CD4-positive, alpha-beta memory T cell (primary cell): ENCODE measurements at regions of chr19 and their contacts with region 1.

Region 1: DNA sequence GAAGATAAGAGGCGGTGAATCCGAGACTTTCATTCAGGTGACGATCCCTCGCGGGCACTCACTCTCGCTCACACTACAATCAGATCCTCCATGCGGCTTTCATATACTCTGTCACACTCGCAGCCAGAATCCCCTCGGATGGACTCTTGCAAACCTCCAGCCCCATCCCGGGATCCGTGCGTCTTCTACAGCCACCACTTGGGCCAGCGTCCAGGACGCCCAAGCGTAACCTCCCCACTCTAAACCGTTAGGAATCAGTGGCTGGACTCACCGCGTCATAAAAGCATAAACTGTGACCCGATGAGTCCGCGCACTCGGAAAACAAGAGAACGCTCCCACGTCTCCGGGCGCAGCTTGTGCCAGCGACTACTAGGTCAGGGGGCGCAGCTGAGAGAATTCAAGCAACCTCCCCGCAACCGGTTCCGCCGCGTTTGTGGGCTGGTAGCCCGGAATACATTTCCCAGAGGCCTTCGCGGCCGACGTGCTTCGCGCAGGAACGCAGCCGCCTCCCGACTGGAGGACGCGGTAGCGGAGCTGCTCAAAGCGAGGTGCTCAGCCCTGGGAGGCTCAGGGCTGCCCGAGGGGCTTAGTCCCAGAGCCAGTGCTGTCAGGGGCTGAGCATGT is 27.6 kb downstream of the ZNF607 start:
- DNase-seq: peak; percentile 70 to 78 (median 73)
- H3K4me3 ChIP-seq: peak overlapping the region; percentile 61 to 80
- H3K4me3 Mint-ChIP-seq: peak overlapping the region; percentile 84 to 98 (median 95)
- H3K27ac ChIP-seq: peak overlapping the region; percentile 49
- H3K27ac Mint-ChIP-seq: peak overlapping the region; percentile 79 to 97 (median 93)
- H3K4me1 ChIP-seq: peaks cover 6% of the 10 kb centered on the region
- H3K4me1 Mint-ChIP-seq: peaks cover 4 to 22% (median 10%) of the 10 kb centered on the region in 4 donors
- H3K27me3 ChIP-seq: no peaks in the 10 kb centered on the region
- H3K27me3 Mint-ChIP-seq: no peaks in the 10 kb centered on the region

Region 2: DNA sequence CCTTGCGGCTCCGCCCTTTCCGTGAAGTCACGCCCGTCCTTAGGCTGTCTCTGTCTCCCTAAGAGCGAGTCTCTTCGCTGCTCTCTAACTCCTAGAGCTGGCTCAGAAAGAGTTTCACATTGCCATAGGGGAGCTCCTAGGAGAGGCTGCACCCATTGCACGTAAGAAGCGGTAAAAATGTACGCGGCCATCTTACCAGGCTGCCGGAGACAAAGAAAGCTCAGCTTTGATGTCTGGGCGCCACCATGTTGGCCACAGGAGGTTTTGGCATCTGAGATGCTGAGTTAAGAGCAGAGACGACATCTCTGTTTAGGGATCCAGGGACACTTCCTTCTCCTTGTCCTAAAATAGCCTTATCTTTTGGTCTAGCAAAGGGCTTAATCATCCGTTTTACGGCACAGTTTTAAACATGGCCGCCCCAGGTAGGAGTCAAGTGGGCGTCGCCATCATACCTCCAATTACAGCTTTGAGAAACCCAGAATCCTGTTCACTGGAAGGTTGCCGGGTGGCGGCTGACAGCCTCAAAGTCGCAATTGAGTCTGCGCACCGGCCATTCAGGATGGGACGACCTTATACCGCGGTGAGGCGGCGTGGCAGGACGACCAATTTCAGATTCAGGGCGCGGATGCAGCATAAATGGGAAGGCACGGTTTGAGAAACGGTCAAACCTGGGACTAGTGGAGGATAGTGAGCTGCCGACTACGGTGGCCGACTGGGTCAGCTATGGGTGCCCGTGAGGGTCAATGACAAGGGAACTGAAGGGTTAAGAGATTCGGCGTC is 185.4 kb before region 1 on chr19 and contains the start of gene ZNF793:
- CTCF ChIA-PET with region 1: no interaction called
- POLR2A ChIA-PET with region 1: interaction called, 8 read pairs
- intact Hi-C with region 1: loop called (anchors 5 kb)
- DNase-seq: peak; percentile 85 to 88 (median 87)
- H3K4me3 ChIP-seq: peak within 1 kb of the TSS; percentile 57 to 78
- H3K4me3 Mint-ChIP-seq: no peak within 1 kb of the TSS
- H3K27ac ChIP-seq: peak within 1 kb of the TSS; percentile 88
- H3K27ac Mint-ChIP-seq: no peak within 1 kb of the TSS
- H3K4me1 ChIP-seq: peaks cover 17% of the 10 kb centered on the region
- H3K4me1 Mint-ChIP-seq: peaks cover 0 to 2% (median 0%) of the 10 kb centered on the region in 4 donors
- H3K27me3 ChIP-seq: no peaks in the 10 kb centered on the region
- H3K27me3 Mint-ChIP-seq: no peaks in the 10 kb centered on the region
- total RNA-seq, gene ZNF793: 10.2 to 13.8 TPM

Region 3: DNA sequence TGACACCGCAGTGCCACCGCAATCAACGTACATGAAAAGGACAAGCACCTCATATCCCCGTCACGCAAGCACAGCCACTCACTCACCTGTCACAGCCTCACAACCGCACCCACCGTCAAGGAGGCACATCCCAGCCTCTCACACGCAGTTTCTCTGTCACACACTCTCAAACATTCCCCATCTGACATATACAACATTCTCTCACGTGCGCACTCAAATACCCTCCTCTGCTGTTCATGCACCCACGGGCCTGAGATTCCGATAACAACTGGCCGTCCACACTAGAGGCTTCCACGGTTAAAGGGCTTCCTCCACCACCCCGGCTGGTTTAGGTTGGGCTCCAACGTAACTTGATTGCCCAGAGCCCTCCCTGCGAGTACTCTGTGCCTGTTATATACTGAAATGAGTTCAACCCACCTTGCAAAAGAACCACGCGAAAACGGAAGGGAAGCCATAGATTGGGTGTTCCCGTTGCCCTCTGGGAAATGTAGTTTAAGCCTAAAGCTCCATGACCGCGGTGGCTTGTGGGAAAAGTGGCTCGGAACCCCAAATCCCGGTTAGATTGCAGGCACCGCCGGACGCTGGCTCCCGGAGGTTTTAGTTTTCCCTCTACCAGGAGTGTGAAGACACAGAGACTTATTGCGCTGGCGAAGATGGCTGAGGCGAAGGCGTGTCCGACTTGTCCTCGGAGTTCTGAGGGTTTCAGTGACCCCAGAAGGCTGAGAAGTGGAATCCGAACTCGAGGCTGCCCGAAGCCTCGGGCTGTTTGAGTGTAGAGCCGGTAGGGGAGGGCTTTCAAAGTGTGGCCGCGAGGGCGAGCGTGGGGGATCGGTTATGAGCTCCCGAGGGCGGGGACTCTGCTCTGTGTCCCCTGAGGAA is 87.4 kb after region 1 on chr19 and contains the start of gene ZNF573:
- CTCF ChIA-PET with region 1: no interaction called
- POLR2A ChIA-PET with region 1: interaction called, 10 read pairs
- intact Hi-C with region 1: no loop called
- DNase-seq: peak; percentile 87 to 99 (median 91)
- H3K4me3 ChIP-seq: peak within 1 kb of the TSS; percentile 74 to 89
- H3K4me3 Mint-ChIP-seq: peak within 1 kb of the TSS; percentile 90 to 99 (median 94)
- H3K27ac ChIP-seq: peak within 1 kb of the TSS; percentile 90
- H3K27ac Mint-ChIP-seq: peak within 1 kb of the TSS; percentile 86 to 100 (median 98)
- H3K4me1 ChIP-seq: peaks cover 18% of the 10 kb centered on the region
- H3K4me1 Mint-ChIP-seq: peaks cover 24 to 46% (median 35%) of the 10 kb centered on the region in 4 donors
- H3K27me3 ChIP-seq: no peaks in the 10 kb centered on the region
- H3K27me3 Mint-ChIP-seq: no peaks in the 10 kb centered on the region
- total RNA-seq, gene ZNF573: 30.5 to 31.1 TPM

Region 4: DNA sequence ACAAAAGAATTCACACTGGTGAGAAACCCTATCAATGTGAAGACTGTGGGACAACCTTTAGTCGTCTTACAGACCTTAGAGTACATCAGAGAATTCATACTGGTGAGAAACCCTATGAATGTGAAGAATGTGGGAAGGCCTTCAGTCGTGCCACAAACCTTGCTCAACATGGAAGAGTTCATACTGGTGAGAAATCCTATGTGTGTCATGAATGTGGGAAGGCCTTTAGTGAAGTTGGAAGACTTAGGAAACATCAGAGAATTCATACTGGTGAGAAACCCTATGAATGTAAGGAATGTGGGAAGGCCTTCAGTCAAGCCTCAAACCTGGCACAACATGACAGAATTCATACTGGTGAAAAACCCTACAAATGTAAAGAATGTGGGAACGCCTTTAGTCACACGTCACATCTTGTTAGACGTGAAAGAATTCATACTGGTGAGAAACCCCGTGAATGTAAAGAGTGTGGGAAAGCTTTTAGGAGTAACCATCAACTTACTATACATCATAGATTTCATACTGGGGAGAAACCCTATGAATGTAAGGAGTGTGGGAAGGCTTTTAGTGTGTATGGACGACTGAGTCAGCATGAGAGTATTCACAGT is 111.4 kb after region 1 on chr19:
- CTCF ChIA-PET with region 1: no interaction called
- POLR2A ChIA-PET with region 1: no interaction called
- intact Hi-C with region 1: no loop called
- DNase-seq: no peak
- H3K4me3 ChIP-seq: no peak overlapping the region
- H3K4me3 Mint-ChIP-seq: no peak overlapping the region
- H3K27ac ChIP-seq: no peak overlapping the region
- H3K27ac Mint-ChIP-seq: no peak overlapping the region
- H3K4me1 ChIP-seq: no peaks in the 10 kb centered on the region
- H3K4me1 Mint-ChIP-seq: no peaks in the 10 kb centered on the region
- H3K27me3 ChIP-seq: no peaks in the 10 kb centered on the region
- H3K27me3 Mint-ChIP-seq: no peaks in the 10 kb centered on the region